MCF 10A (cell line): ENCODE measurements at regions of chr5 and their contacts with region 1.

Region 1: DNA sequence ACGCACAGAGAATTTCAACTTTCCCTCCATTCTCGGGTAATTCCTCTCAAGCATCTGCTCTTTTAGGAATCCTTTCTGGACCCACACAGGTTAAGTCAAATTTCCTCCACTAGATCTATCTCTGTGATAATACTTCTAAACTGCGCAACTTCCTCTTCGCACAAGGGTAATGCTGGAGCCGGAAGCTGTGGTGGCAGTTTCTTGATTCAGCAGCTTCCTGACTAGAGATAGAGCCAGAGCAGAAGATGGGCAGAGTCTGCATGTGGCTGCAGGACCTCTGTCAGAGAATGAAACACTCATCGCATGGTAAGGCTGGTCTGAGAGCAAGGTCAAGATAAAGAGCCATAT is 11.1 kb upstream of the CDC42SE2 start:
- DNase-seq: no peak
- H3K4me3 Mint-ChIP-seq: no peak overlapping the region
- H3K27ac Mint-ChIP-seq: no peak overlapping the region
- H3K4me1 Mint-ChIP-seq: peaks cover under 1% of the 10 kb centered on the region
- H3K27me3 Mint-ChIP-seq: no peaks in the 10 kb centered on the region
- CTCF ChIP-seq: no peak

Region 2: DNA sequence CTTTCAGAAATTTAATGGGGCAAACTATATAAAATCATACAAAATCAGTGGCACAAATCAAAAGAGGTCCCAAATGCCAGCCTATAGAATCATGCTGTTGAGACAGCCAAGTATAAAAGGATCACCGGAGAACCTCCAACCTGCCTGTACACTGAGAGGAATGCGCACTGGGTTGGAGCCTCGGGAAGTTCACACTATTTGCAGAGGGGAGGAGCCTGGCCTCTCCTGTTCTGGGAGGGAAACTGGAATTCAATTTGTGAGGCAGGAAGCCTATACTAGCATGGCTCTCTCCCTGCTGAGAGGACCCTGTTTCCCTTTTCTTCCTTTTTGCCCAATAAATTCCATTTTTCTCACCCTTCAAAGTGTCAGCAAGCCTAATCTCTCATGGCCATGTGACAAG is 493.7 kb before region 1 on chr5:
- CTCF ChIA-PET with region 1: no interaction called
- POLR2A ChIA-PET with region 1: no interaction called
- intact Hi-C with region 1: no loop called
- DNase-seq: no peak
- H3K4me3 Mint-ChIP-seq: no peak overlapping the region
- H3K27ac Mint-ChIP-seq: no peak overlapping the region
- H3K4me1 Mint-ChIP-seq: no peaks in the 10 kb centered on the region
- H3K27me3 Mint-ChIP-seq: no peaks in the 10 kb centered on the region
- CTCF ChIP-seq: no peak

Region 3: DNA sequence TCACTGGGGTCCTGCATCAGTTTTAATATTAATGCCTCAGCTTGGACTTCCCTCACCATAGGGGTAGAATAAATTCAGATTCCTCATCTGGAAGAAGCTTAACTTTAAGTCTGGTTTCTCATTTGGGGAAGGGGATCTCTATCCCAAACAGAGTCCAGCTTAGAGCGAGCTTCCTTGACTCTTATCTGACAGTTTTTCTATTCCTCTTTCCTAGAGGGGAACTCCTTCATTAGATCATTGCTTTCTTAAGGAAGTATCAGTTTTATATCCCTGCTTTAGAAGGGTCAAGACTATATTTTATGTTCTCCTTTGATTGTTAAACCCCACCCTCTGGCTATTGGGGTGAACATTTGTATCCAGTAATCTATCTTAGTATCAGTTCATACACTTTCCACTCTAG is 13.1 kb before region 1 on chr5:
- CTCF ChIA-PET with region 1: interaction called, 5 read pairs
- POLR2A ChIA-PET with region 1: interaction called, 18 read pairs
- intact Hi-C with region 1: no loop called
- DNase-seq: no peak
- H3K4me3 Mint-ChIP-seq: no peak overlapping the region
- H3K27ac Mint-ChIP-seq: no peak overlapping the region
- H3K4me1 Mint-ChIP-seq: peaks cover 11% of the 10 kb centered on the region
- H3K27me3 Mint-ChIP-seq: no peaks in the 10 kb centered on the region
- CTCF ChIP-seq: no peak